ENCODE measurements at regions of chr7 and their contacts with region 1.

Region 1: GRCh38 chr7:45122975-45123860 is 11.7 kb upstream of the TBRG4 start:
- DNase-seq: no peak
- H3K4me3 ChIP-seq: no peak overlapping the region
- H3K27ac ChIP-seq: no peak overlapping the region
- H3K4me1 ChIP-seq: peaks cover 0 to 2% of the 10 kb centered on the region in 2 experiments; a peak in 1 of 4 replicates
- H3K27me3 ChIP-seq: no peaks in the 10 kb centered on the region; the same call in 1 of the 2 replicates
- CTCF ChIP-seq: no peak
- EP300 ChIP-seq: no peak
- RAD21 ChIP-seq: no peak

Region 2: DNA sequence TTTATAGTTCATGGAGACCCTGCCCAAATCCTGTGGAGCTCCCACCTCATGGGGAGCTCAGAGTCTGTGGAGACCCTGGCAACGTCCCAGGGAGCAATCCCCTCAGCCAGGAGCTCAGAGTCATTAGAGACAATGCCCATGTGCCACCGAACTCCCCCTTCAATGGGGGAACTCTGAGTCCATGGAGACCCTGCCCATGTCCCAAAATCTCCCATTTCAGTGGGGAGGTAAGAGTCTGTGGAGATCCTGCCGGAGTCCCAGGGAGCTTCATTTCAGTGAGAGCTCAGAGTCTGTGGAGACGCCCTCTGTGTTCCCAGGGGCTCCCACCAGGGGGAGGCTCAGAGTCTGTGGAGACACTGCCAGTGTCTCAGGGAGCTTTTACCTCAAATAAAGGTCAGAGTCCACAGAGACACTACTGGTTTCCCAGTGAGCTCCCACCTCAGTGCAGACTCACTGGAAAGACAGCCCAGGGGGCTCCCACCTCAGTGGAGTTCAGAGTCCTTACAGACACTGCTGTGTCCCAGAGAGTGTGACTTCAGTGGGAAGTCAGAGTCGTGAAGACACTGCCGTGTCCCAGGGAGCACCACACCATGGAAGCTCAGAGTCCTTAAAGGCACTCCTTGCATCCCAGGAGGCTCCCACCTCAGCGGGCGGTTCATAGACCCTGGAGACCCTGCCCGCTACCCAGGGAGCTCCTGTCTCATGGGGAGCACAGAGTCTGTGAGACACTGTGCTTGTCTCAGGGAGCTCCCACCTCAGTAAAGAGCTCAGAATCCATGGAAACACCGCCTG is 149.4 kb before region 1 on chr7:
- CTCF ChIA-PET with region 1: interaction called, 14 read pairs
- POLR2A ChIA-PET with region 1: no interaction called
- DNase-seq: peak; percentile 75
- H3K4me3 ChIP-seq: no peak overlapping the region
- H3K27ac ChIP-seq: no peak overlapping the region
- H3K4me1 ChIP-seq: peaks cover 0 to 3% of the 10 kb centered on the region in 2 experiments; a peak in 1 of 4 replicates
- H3K27me3 ChIP-seq: no peaks in the 10 kb centered on the region
- CTCF ChIP-seq: peak; percentile 61
- EP300 ChIP-seq: no peak
- RAD21 ChIP-seq: peak; percentile 59